ENCODE measurements at regions of chr14 and their contacts with region 1.

Region 1: GRCh38 chr14:75002392-75003249 is at the start of gene EIF2B2:
- DNase-seq: peak; percentile 90 to 100 (median 99)
- ATAC-seq: peak; percentile 97
- H3K4me3 ChIP-seq: peak within 1 kb of the TSS; percentile 93
- H3K4me3 Mint-ChIP-seq: peak within 1 kb of the TSS; percentile 78 to 99 (median 94)
- H3K27ac ChIP-seq: peak within 1 kb of the TSS; percentile 91
- H3K27ac Mint-ChIP-seq: peak within 1 kb of the TSS; percentile 95 to 100 (median 97)
- H3K4me1 ChIP-seq: peaks cover 15 to 23% of the 10 kb centered on the region in 2 donors
- H3K4me1 Mint-ChIP-seq: peaks cover 23 to 50% (median 44%) of the 10 kb centered on the region in 7 donors
- H3K27me3 ChIP-seq: no peaks in the 10 kb centered on the region
- H3K27me3 Mint-ChIP-seq: peaks cover 0 to 5% (median 0%) of the 10 kb centered on the region in 5 donors
- total RNA-seq, gene EIF2B2: 23.8 to 40.7 (median 26.1) TPM

Region 2: GRCh38 chr14:74712499-74713394 is 289.9 kb before region 1 on chr14 and contains the starts of genes AREL1 and FCF1:
- CTCF ChIA-PET with region 1: no interaction called
- POLR2A ChIA-PET with region 1: no interaction called
- intact Hi-C with region 1: loop called (anchors 2 to 5 kb)
- DNase-seq: peak; percentile 53 to 87 (median 82)
- ATAC-seq: peak; percentile 96
- H3K4me3 ChIP-seq: peak within 1 kb of the TSS; percentile 75
- H3K4me3 Mint-ChIP-seq: peak within 1 kb of the TSS; percentile 93 to 100 (median 97)
- H3K27ac ChIP-seq: peak within 1 kb of the TSS; percentile 96
- H3K27ac Mint-ChIP-seq: peak within 1 kb of the TSS; percentile 95 to 100 (median 98)
- H3K4me1 ChIP-seq: peaks cover 9 to 24% of the 10 kb centered on the region in 2 donors
- H3K4me1 Mint-ChIP-seq: peaks cover 33 to 79% (median 66%) of the 10 kb centered on the region in 7 donors
- H3K27me3 ChIP-seq: no peaks in the 10 kb centered on the region
- H3K27me3 Mint-ChIP-seq: no peaks in the 10 kb centered on the region
- total RNA-seq, gene AREL1: 35.6 to 52.0 (median 43.5) TPM
- total RNA-seq, gene FCF1: 36.5 to 66.6 (median 60.8) TPM

Region 3: DNA sequence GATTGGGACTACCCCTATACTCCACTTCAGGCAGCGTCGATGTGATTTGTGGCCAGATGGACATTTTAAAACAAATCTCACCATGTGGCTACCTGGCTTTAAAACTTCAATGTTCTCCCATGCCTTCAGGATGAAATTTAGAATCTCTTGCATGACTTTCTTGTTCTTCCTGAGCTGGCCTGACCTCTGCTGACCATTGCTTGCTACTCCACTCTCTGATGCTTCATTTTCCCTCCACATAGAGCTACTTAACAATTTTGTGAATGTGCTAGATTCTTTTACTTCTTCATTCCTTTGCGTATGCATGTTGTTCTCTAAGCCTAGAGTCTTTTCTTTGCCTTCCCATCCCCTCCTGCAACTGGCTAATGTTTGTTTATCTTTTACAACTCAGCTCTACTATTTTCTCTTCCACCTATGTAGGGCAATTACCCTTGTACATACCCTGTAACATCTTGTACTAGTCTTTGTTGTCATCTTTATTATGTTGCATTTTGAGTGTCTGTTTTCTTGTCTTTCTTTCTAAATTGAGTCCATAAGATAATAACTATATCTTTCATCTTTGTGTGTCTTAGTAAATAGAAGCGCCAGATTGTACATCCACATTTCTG is 198.3 kb before region 1 on chr14:
- CTCF ChIA-PET with region 1: no interaction called
- POLR2A ChIA-PET with region 1: no interaction called
- intact Hi-C with region 1: no loop called
- DNase-seq: peak in 5 of 9 donors; percentile 8 to 41 (median 28)
- ATAC-seq: no peak
- H3K4me3 ChIP-seq: no peak overlapping the region
- H3K4me3 Mint-ChIP-seq: no peak overlapping the region
- H3K27ac ChIP-seq: no peak overlapping the region
- H3K27ac Mint-ChIP-seq: peak overlapping the region in 2 of 9 donors; percentile 6 to 29
- H3K4me1 ChIP-seq: no peaks in the 10 kb centered on the region
- H3K4me1 Mint-ChIP-seq: peaks cover 2 to 25% (median 14%) of the 10 kb centered on the region in 7 donors
- H3K27me3 ChIP-seq: no peaks in the 10 kb centered on the region
- H3K27me3 Mint-ChIP-seq: no peaks in the 10 kb centered on the region

Region 4: GRCh38 chr14:74881431-74882361 is 120.9 kb before region 1 on chr14 and contains the start of gene DLST:
- CTCF ChIA-PET with region 1: no interaction called
- POLR2A ChIA-PET with region 1: interaction called, 3 read pairs
- intact Hi-C with region 1: loop called (anchors 1 to 5 kb)
- DNase-seq: peak; percentile 74 to 94 (median 81)
- ATAC-seq: peak; percentile 91
- H3K4me3 ChIP-seq: peak within 1 kb of the TSS; percentile 77
- H3K4me3 Mint-ChIP-seq: peak within 1 kb of the TSS; percentile 94 to 100 (median 98)
- H3K27ac ChIP-seq: peak within 1 kb of the TSS; percentile 91
- H3K27ac Mint-ChIP-seq: peak within 1 kb of the TSS; percentile 96 to 100 (median 99)
- H3K4me1 ChIP-seq: peaks cover 30 to 34% of the 10 kb centered on the region in 2 donors
- H3K4me1 Mint-ChIP-seq: peaks cover 49 to 82% (median 72%) of the 10 kb centered on the region in 7 donors
- H3K27me3 ChIP-seq: no peaks in the 10 kb centered on the region
- H3K27me3 Mint-ChIP-seq: no peaks in the 10 kb centered on the region
- total RNA-seq, gene DLST: 90.0 to 132 (median 96.5) TPM

Region 5: GRCh38 chr14:75050852-75051554 is 48.4 kb after region 1 on chr14 and contains the start of gene MLH3:
- CTCF ChIA-PET with region 1: no interaction called
- POLR2A ChIA-PET with region 1: no interaction called
- intact Hi-C with region 1: loop called (anchors 1 kb)
- DNase-seq: peak; percentile 69 to 82 (median 78)
- ATAC-seq: peak; percentile 90
- H3K4me3 ChIP-seq: peak within 1 kb of the TSS; percentile 81
- H3K4me3 Mint-ChIP-seq: peak within 1 kb of the TSS; percentile 92 to 96 (median 94)
- H3K27ac ChIP-seq: peak within 1 kb of the TSS; percentile 86
- H3K27ac Mint-ChIP-seq: peak within 1 kb of the TSS; percentile 90 to 98 (median 95)
- H3K4me1 ChIP-seq: peaks cover 8 to 9% of the 10 kb centered on the region in 2 donors
- H3K4me1 Mint-ChIP-seq: peaks cover 19 to 65% (median 47%) of the 10 kb centered on the region in 7 donors
- H3K27me3 ChIP-seq: no peaks in the 10 kb centered on the region
- H3K27me3 Mint-ChIP-seq: no peaks in the 10 kb centered on the region
- total RNA-seq, gene MLH3: 19.9 to 26.7 (median 20.5) TPM

Region 6: GRCh38 chr14:75176142-75176820 is 173.7 kb after region 1 on chr14 and contains the start of gene TMED10:
- CTCF ChIA-PET with region 1: no interaction called
- POLR2A ChIA-PET with region 1: no interaction called
- intact Hi-C with region 1: loop called (anchors 1 kb)
- DNase-seq: peak; percentile 86 to 96 (median 94)
- ATAC-seq: peak; percentile 84
- H3K4me3 ChIP-seq: peak within 1 kb of the TSS; percentile 93
- H3K4me3 Mint-ChIP-seq: peak within 1 kb of the TSS; percentile 77 to 96 (median 91)
- H3K27ac ChIP-seq: peak within 1 kb of the TSS; percentile 98
- H3K27ac Mint-ChIP-seq: peak within 1 kb of the TSS; percentile 95 to 99 (median 97)
- H3K4me1 ChIP-seq: peaks cover 27 to 33% of the 10 kb centered on the region in 2 donors
- H3K4me1 Mint-ChIP-seq: peaks cover 27 to 60% (median 53%) of the 10 kb centered on the region in 7 donors
- H3K27me3 ChIP-seq: no peaks in the 10 kb centered on the region
- H3K27me3 Mint-ChIP-seq: peaks cover 0 to 7% (median 0%) of the 10 kb centered on the region in 5 donors
- total RNA-seq, gene TMED10: 155 to 233 (median 171) TPM

Region 7: DNA sequence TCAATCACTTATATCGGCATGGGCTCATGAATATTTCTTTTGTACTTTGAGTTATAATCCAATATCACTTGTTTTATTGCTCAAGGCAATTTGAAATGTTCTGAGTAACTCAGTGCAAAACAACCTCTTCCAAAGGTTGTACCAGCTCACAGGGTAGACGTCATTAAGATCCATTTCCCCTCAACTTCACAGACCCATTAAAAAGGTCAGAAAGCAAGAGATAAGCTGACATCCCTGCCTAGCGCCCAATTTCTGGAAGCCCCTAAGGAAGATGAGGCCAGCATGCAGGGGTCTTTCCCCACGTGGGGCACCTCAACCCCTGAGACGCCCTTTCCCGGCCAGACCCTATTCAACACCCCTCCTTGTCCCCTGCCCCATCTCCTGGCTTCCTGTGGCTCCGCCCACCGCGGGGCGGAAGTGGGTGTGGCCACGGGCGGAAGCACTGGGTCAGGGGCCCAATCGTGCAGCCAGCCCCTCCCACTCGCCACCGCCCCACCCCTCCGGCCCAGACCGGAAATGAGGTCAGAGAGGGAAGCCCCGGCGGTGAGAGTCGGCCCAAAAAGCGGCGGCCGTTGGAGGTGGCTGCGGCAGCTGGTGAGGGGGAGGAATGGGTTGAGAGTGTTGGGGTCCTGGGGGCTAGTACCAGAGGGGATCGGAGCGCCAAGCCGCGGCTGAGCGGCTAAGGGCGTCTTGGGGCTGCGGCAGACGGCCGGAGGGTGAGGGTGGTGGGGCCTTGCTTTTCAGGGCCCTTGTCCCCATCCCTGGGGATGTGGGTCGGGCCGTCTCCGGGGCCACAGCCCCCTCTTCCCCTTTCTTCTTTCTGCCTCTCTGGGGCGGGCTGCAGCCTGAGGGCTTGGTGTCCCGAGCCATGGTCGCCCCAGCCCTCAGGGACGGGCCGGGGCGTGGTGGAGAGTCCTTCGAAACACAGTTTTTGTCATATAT is 1149.0 kb after region 1 on chr14 and contains the start of gene GPATCH2L:
- CTCF ChIA-PET with region 1: no interaction called
- POLR2A ChIA-PET with region 1: no interaction called
- intact Hi-C with region 1: loop called in 1 of 2 experiments (anchors 5 kb)
- DNase-seq: peak; percentile 90 to 98 (median 95)
- ATAC-seq: peak; percentile 96
- H3K4me3 ChIP-seq: peak within 1 kb of the TSS; percentile 91
- H3K4me3 Mint-ChIP-seq: peak within 1 kb of the TSS; percentile 89 to 98 (median 95)
- H3K27ac ChIP-seq: peak within 1 kb of the TSS; percentile 95
- H3K27ac Mint-ChIP-seq: peak within 1 kb of the TSS; percentile 86 to 98 (median 96)
- H3K4me1 ChIP-seq: peaks cover 40 to 44% of the 10 kb centered on the region in 2 donors
- H3K4me1 Mint-ChIP-seq: peaks cover 40 to 56% (median 53%) of the 10 kb centered on the region in 7 donors
- H3K27me3 ChIP-seq: no peaks in the 10 kb centered on the region
- H3K27me3 Mint-ChIP-seq: peaks cover 0 to 18% (median 0%) of the 10 kb centered on the region in 5 donors
- total RNA-seq, gene GPATCH2L: 60.4 to 83.1 (median 66.6) TPM

Measured in naive thymus-derived CD4-positive, alpha-beta T cell (primary cell).